ENCODE measurements at regions of chr5 and their contacts with region 1.

Region 1: DNA sequence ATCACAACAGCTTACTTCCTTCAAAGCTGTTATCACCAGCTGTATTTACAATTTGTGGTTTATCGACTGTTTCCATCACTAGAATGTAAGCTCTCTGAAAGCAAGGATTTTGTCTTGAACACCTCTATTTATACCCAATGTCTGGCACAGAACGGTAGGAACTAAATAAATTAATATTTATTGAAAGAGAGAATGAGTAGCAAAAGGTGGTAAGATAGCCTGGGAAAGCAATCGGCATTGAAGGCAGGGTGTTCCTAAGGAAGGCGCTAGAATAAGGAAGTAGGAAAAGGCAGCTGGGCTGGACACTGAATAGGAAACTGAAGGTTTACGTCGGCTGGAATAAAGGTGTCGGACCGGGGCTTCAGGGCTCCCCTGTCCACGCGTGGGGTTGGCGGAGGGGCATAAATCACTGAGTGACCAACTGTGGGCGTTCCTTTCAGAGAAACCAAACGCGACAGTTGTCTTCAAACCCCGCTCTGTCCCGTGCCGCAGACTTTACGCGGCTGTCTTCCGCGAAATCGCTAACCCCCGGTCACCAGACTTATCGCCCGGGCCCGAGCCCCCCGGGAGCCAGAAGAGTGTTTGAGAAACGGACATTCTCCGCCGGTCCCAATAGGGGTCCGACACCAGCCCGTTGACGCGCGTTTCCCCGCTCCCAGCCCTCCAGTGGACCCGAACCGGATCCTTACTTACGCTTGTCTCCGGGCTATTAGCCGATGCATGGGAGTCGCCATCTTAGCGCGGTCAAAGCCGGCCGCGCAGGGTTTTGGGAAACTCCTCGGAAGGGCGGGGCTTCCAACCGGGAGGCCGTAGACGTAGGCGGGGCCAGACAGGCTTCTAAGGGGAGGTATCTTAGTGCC is at the start of gene ZCCHC10:
- DNase-seq: peak; percentile 94

Region 2: DNA sequence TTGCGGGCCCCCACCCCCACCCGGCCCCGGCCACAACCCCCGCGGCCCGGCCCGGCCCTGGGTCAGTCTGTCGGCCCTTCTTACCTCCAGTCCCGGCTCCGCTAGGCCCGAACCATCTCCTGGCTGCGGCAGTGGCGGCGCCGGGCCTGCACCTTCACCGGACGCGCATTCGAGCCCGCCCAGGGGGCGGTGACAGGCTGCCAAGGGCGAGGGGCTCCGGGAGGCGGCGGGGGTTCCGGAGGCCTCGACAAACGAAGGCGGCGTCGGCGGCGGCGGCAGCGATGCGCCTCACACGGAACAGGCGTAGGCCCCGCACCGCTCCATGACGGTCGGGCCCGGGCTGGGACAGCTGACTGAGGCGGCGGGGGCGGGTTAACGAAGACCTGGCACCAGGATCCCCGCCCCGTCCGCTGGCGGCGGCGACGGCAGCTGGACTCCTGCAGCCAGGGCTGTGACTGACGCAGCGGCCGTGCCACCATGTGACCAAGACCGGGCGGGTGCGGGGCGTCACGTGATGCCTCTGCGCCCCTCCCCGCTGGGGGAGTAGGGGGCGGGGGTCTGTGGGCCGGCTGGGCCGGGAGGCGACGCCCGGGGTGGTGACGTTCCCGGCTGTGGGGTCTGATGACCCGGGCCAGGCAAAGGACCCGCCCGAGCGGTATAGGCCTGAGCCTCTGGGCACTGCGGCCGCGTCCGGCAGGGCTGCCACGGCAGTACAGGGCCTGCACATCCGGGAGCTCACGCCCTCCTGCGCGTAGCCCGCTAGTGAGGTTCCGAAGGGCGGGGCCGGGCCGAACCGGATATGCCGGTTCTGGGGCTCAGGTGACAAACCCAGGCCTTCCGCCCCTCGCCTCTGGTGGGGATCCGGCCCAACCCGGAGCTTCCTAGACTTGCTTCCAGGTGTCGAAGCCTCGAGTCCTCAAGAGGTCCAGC is 62.6 kb before region 1 on chr5 and contains the start of gene AFF4:
- CTCF ChIA-PET with region 1: no interaction called
- POLR2A ChIA-PET with region 1: interaction called, 13 read pairs
- DNase-seq: peak; percentile 93

Measured in HEK293T (cell line).